ENCODE measurements at regions of chr22 and their contacts with region 1.

Region 1: GRCh38 chr22:50250555-50251476 is at the start of gene HDAC10:
- DNase-seq: peak; percentile 63
- ATAC-seq: peak; percentile 51
- H3K4me3 ChIP-seq: peak within 1 kb of the TSS; percentile 84
- H3K27ac ChIP-seq: no peak within 1 kb of the TSS
- H3K4me1 ChIP-seq: peaks cover 11% of the 10 kb centered on the region; the same call in 1 of the 2 replicates
- H3K27me3 ChIP-seq: no peaks in the 10 kb centered on the region
- CTCF ChIP-seq: no peak
- total RNA-seq, gene HDAC10: 25.8 and 34.5 TPM in 2 replicates

Region 2: GRCh38 chr22:50271519-50271970 is 20.7 kb after region 1 on chr22:
- CTCF ChIA-PET with region 1: interaction called, 16 read pairs
- POLR2A ChIA-PET with region 1: no interaction called
- intact Hi-C with region 1: no loop called
- DNase-seq: peak; percentile 56
- ATAC-seq: peak; percentile 31
- H3K4me3 ChIP-seq: peak overlapping the region; percentile 68
- H3K27ac ChIP-seq: no peak overlapping the region
- H3K4me1 ChIP-seq: peaks cover 11% of the 10 kb centered on the region
- H3K27me3 ChIP-seq: no peaks in the 10 kb centered on the region
- CTCF ChIP-seq: no peak

Region 3: DNA sequence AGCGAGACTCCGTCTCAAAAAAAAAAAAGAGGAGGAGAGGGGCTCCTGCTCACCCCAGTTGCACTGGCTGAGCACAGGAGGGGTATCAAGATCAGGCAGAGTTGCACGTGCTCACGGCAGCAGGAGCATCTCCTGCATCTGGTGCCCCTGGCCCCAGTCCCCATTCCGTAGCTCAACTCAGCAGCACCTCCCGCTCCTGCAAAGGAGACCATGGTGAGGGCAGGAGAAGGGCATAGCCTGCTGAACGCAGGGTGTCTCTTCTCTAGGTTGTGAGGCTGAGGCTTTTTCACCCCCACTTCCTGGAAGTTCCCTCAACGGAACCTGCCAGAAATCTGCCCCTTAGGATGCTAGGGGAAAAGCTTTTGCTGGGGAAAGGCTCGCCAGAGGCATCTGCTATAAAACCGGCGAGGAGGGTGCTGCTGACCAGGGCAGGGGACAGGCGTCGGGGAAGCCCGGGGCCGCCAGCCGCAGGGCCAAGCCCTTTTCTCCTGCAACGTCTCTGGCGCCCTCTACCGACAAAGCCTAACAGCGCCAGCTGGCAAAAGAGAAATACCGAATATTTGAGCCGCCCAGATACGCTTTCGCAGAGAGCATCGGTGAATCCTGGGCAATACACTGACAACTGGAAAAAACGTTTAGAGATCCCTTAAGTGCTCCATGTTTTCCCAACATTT is 91.3 kb after region 1 on chr22:
- CTCF ChIA-PET with region 1: interaction called, 4 read pairs
- POLR2A ChIA-PET with region 1: no interaction called
- intact Hi-C with region 1: loop called (anchors 5 kb)
- DNase-seq: peak; percentile 89
- ATAC-seq: peak; percentile 79
- H3K4me3 ChIP-seq: peak overlapping the region; percentile 80
- H3K27ac ChIP-seq: peak overlapping the region; percentile 71
- H3K4me1 ChIP-seq: no peaks in the 10 kb centered on the region
- H3K27me3 ChIP-seq: no peaks in the 10 kb centered on the region
- CTCF ChIP-seq: peak; percentile 87

Region 4: GRCh38 chr22:50361688-50362087 is 110.9 kb after region 1 on chr22:
- CTCF ChIA-PET with region 1: no interaction called
- POLR2A ChIA-PET with region 1: no interaction called
- intact Hi-C with region 1: loop called (anchors 1 kb)
- DNase-seq: no peak
- ATAC-seq: no peak
- H3K4me3 ChIP-seq: no peak overlapping the region
- H3K27ac ChIP-seq: no peak overlapping the region
- H3K4me1 ChIP-seq: no peaks in the 10 kb centered on the region
- H3K27me3 ChIP-seq: no peaks in the 10 kb centered on the region
- CTCF ChIP-seq: no peak

Measured in PC-3 (cell line).